ENCODE measurements at regions of chr13 and their contacts with region 1.

Region 1: DNA sequence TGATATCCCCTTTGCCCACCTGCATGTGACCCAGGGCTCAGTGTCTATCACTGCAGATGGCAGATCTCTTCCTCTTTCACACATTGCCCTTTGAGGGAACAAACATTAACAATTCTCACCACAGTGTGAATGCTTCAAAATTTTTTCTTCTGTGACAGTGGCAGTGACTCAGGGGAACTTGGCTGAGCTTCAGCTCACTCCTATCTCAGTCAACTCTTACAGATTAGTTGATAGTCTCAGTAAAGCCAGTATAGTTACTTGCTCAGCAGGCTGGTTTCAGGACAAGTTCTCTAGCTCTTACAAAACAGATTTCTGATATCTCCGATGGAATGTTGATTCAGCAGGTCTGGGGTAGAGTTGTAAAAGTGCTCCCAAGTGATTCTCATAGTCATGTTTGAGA is 166.9 kb downstream of the DLEU7 start:
- DNase-seq: no peak
- H3K4me3 ChIP-seq: no peak overlapping the region
- H3K27ac ChIP-seq: peak overlapping the region in 24 of 59 donors; percentile 50 to 92 (median 84)
- H3K27me3 ChIP-seq: no peaks in the 10 kb centered on the region
- CTCF ChIP-seq: no peak

Region 2: DNA sequence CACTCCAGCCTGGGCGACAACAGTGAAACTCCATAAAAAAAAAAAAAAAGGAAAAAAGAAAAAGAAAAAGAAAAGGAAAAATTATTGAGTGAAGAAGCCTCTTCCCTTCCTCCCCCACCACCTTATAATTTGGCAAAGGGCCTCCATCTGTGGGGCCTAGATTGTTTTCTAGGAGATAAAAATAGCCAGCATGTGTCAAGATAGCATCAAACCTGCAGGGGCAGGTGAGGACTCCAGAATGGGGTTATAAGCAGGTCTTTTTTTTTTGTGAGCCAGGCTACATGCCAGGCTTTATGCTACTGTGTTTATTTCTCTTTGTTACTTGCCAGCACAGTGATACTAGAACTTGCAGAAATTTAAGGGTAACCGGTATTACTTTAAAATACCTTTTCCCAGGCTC is 691.5 kb before region 1 on chr13:
- intact Hi-C with region 1: loop called in 1 of 2 experiments (anchors 10 kb)
- DNase-seq: no peak
- H3K4me3 ChIP-seq: no peak overlapping the region
- H3K27ac ChIP-seq: peak overlapping the region in 2 of 59 donors; percentile 12 to 47
- H3K27me3 ChIP-seq: no peaks in the 10 kb centered on the region
- CTCF ChIP-seq: no peak